CD14-positive monocyte (primary cell): ENCODE measurements at regions of chr3 and their contacts with region 1.

Region 1: DNA sequence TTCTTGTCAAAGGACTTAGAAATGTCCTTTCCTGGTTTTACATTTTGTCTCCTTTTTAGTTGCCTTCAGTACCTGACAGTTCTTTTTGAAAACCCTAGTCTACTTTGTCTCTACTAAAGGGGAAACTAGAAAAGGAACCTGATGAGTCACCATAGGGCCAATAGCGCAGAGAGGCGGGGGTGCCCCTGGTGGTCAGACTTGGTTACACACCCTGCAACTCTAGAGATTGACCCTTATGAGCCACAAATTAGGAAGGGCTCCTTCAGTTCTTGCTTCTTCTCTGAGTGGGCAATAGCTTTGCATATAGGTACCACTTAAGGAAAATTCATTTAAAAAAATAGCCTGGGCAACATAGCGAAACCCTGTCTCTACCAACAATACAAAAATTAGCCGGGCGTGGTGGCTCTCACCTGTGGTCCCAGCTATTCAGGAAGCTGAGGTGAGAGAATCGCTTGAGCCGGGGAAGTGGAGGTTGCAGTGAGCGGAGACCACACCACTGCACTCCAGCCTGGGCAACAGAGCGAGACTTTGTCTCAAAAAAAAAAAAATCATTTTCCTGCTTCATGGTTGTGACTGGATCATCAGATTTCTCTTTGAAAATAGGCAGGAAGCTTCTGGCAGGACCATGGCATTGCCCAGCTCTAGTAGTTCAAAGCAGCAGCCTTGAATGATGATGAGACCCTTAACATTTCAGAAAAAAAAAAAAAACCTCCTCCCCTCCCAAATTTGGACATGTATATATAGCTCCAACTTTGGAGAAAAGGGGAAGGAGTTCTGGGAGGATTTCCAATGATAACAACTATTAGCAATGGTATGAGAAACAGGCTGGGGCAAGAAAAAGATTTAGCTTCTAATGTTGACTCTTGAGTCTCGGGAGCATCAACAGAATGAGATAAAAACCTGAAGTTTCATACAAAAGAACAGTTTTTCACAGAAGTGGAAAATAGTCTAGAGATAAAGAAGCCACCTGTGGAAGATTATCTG is 45.2 kb upstream of the RASA2 start:
- DNase-seq: peak; percentile 72 to 89 (median 81)
- H3K4me3 ChIP-seq: no peak overlapping the region
- H3K4me3 Mint-ChIP-seq: peak overlapping the region in 1 of 2 donors; percentile 28
- H3K27ac ChIP-seq: no peak overlapping the region
- H3K27ac Mint-ChIP-seq: peak overlapping the region in 2 of 7 donors; percentile 38 to 71
- H3K4me1 ChIP-seq: peaks cover 0 to 4% of the 10 kb centered on the region in 2 donors
- H3K4me1 Mint-ChIP-seq: peaks cover 13% of the 10 kb centered on the region
- H3K27me3 ChIP-seq: no peaks in the 10 kb centered on the region
- H3K27me3 Mint-ChIP-seq: no peaks in the 10 kb centered on the region
- CTCF ChIP-seq: peak; percentile 98

Region 2: GRCh38 chr3:141303481-141304223 is 138.0 kb before region 1 on chr3:
- intact Hi-C with region 1: loop called (anchors 5 kb)
- DNase-seq: peak; percentile 59 to 77 (median 70)
- H3K4me3 ChIP-seq: peak overlapping the region in 2 of 3 experiments; percentile 3 to 51
- H3K4me3 Mint-ChIP-seq: peak overlapping the region; percentile 6 to 59
- H3K27ac ChIP-seq: no peak overlapping the region
- H3K27ac Mint-ChIP-seq: peak overlapping the region in 1 of 7 donors; percentile 50
- H3K4me1 ChIP-seq: peaks cover 7 to 10% of the 10 kb centered on the region in 2 donors
- H3K4me1 Mint-ChIP-seq: peaks cover 12% of the 10 kb centered on the region
- H3K27me3 ChIP-seq: no peaks in the 10 kb centered on the region
- H3K27me3 Mint-ChIP-seq: peaks cover 0 to 2% (median 0%) of the 10 kb centered on the region in 3 donors
- CTCF ChIP-seq: peak; percentile 94

Region 3: DNA sequence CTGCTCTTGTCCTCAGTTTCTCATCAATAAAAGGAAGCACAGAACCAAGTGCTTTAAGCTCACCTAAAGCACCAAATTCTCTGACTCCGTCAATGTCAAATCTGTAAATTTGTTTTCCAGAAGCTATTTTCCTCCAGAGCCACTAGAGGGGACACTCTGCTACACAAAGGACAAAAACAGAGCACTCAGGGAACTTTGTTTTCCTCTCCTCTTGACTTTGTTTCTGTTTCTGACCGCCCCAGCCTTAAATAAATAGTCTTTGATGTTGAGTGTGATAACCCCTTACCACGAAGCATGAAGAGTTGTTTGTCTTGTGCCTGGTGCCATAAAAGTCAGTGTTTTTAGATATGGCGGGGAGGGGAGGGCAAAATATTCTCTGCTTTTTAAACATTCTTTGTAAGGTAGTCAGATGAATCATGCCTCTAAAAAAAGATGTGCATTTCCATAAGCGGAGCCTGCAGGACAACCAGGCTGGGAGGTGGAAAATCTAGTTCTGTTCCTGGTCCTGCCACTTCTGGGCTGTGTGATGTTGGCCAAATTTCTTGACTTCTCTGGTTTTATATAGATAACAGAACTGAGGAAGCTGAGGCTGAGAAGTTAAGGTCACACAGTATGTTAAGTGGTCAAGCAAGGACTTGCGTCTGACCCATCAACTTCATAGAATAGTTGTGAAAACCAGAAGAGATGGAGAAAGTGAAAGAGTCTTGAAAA is 80.6 kb before region 1 on chr3:
- intact Hi-C with region 1: loop called in 1 of 2 experiments (anchors 5 kb)
- DNase-seq: peak in 2 of 3 donors; percentile 15 to 25
- H3K4me3 ChIP-seq: no peak overlapping the region
- H3K4me3 Mint-ChIP-seq: no peak overlapping the region
- H3K27ac ChIP-seq: no peak overlapping the region
- H3K27ac Mint-ChIP-seq: no peak overlapping the region
- H3K4me1 ChIP-seq: no peaks in the 10 kb centered on the region
- H3K4me1 Mint-ChIP-seq: peaks cover 8% of the 10 kb centered on the region
- H3K27me3 ChIP-seq: no peaks in the 10 kb centered on the region
- H3K27me3 Mint-ChIP-seq: peaks cover 0 to 5% (median 4%) of the 10 kb centered on the region in 3 donors
- CTCF ChIP-seq: peak; percentile 59